Endothelial cell of umbilical vein (primary cell): ENCODE measurements at regions of chrX and their contacts with region 1.

Region 1: DNA sequence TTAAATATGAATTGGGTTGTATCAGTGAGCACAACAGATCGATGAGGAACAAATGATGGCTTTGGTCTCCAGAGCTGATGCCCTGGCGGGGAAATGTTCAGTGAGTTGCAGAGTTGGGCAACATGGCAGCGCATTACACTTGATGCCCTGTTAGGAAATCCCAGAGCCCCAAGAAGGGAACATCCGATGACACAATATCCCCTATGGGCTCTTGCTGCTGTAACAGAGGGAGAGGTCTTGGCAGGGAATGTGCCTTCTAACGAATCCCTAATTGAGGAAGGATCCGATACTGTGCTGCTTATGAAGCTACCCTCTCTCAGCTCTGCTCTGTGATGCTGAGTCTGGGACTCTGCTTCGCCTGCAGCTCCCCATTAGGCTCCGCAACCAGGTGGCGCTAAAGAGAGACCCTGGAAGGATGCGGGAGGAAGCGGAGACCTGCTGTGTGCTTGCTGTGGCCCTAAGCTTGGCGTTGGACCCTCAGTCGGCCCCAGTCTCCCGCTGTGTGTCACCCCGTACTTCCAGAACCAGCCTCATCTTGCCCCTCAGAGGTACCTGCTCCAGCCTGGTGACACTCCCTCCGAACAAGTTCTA is 38.9 kb downstream of the PDHA1 start:
- DNase-seq: peak; percentile 30
- H3K4me3 ChIP-seq: no peak overlapping the region
- H3K27ac ChIP-seq: no peak overlapping the region
- H3K4me1 ChIP-seq: no peaks in the 10 kb centered on the region
- H3K27me3 ChIP-seq: no peaks in the 10 kb centered on the region
- CTCF ChIP-seq: peak; percentile 45 to 60
- POLR2A ChIP-seq: no peak

Region 2: DNA sequence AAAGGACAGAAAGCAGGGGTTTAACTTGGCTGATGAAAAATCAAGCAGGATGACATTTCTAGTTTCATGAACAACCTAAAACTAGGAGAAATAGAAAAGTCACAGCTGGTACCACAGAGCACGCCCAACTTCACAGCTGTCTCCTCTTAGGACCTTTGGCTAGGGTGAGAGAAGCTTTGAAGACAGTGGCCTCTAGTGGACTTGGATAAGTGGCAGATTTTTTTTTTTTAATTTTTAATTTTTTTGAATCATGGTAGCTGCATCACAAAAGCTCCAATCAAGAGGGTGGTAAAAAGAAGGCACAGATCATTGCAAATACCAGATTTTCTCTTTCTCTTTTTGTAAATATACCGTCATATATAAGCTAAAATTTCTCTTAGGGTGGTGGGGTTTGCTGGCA is 152.8 kb after region 1 on chrX:
- CTCF ChIA-PET with region 1: interaction called, 28 read pairs
- POLR2A ChIA-PET with region 1: no interaction called
- dilution Hi-C with region 1: no loop called
- intact Hi-C with region 1: loop called (anchors 1 kb)
- DNase-seq: no peak
- H3K4me3 ChIP-seq: no peak overlapping the region
- H3K27ac ChIP-seq: no peak overlapping the region
- H3K4me1 ChIP-seq: no peaks in the 10 kb centered on the region
- H3K27me3 ChIP-seq: no peaks in the 10 kb centered on the region
- CTCF ChIP-seq: peak; percentile 7 to 21
- POLR2A ChIP-seq: no peak

Region 3: DNA sequence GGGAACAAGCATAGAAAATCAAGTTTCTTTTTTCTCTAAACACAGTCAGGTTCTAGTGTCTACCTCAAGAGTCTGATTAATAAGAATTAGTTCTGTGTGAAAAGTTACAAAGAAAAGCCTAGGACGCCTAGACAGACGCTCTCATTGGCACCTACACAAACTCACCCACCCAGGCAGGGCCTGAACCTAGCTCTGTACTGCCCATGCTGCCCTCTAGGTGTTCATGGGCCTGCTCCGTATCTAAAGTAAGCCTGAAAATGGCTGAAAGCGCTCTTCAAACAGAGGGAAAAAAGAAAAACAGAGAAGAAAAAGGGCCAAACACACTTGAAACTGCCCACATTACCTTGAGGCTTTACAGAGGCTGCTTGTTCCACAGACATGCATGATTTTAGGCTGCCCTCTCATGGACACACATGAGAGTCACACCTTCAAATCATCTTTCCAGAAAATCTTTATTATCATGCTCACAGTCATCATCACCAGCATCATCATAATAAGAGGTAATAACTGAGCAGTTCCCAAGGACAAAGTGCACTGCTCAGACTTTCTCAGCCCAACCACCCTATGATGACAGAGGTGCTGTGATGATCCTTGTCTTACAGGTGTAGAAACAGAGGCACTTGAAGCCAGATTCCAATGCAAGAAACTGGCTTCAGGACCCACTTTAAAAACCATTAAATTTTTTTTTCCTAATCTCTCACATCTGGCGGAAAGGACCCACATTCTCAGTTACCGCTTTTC is 684.5 kb after region 1 on chrX:
- CTCF ChIA-PET with region 1: interaction called, 11 read pairs
- POLR2A ChIA-PET with region 1: no interaction called
- dilution Hi-C with region 1: no loop called
- intact Hi-C with region 1: no loop called
- DNase-seq: peak; percentile 11
- H3K4me3 ChIP-seq: no peak overlapping the region
- H3K27ac ChIP-seq: no peak overlapping the region
- H3K4me1 ChIP-seq: peaks cover 4% of the 10 kb centered on the region
- H3K27me3 ChIP-seq: no peaks in the 10 kb centered on the region
- CTCF ChIP-seq: peak in 1 of 2 donors; percentile 15
- POLR2A ChIP-seq: no peak